Calu3 (cell line): ENCODE measurements at regions of chr3 and their contacts with region 1.

Region 1: GRCh38 chr3:51530490-51530889 is 8.0 kb upstream of the RAD54L2 start:
- DNase-seq: no peak
- H3K4me3 Mint-ChIP-seq: no peak overlapping the region
- H3K27ac Mint-ChIP-seq: no peak overlapping the region
- H3K4me1 Mint-ChIP-seq: no peaks in the 10 kb centered on the region
- H3K27me3 Mint-ChIP-seq: peaks cover 48% of the 10 kb centered on the region
- CTCF ChIP-seq: no peak

Region 2: GRCh38 chr3:51511000-51511399 is 19.5 kb before region 1 on chr3:
- CTCF ChIA-PET with region 1: no interaction called
- intact Hi-C with region 1: loop called (anchors 1 kb)
- DNase-seq: no peak
- H3K4me3 Mint-ChIP-seq: no peak overlapping the region
- H3K27ac Mint-ChIP-seq: no peak overlapping the region
- H3K4me1 Mint-ChIP-seq: no peaks in the 10 kb centered on the region
- H3K27me3 Mint-ChIP-seq: no peaks in the 10 kb centered on the region
- CTCF ChIP-seq: no peak

Region 3: DNA sequence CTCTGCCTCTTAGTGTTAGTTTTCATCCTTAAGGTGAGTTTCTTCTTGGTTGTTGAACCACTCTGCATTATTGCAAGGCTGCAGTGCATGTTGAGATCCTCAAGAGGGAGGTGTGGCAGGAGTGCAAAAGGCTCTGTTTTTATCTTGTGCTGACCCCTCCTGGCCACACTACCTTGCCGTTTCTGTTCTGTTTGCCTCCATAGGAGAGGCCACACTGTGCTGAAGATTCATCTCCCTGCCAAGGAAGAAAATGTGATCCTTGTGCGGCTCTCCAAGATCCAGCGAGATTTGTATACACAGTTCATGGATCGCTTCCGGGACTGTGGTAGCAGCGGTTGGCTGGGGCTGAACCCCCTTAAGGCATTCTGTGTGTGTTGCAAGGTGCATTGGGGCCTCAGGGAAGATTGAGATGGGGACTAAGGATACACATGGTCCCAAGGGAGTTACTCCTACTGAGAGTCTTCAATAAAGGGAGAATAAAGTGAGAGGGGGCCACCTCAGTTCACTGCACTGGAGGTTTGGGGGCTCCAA is 107.5 kb after region 1 on chr3:
- CTCF ChIA-PET with region 1: no interaction called
- intact Hi-C with region 1: no loop called
- DNase-seq: peak; percentile 58
- H3K4me3 Mint-ChIP-seq: no peak overlapping the region
- H3K27ac Mint-ChIP-seq: no peak overlapping the region
- H3K4me1 Mint-ChIP-seq: no peaks in the 10 kb centered on the region
- H3K27me3 Mint-ChIP-seq: no peaks in the 10 kb centered on the region
- CTCF ChIP-seq: peak; percentile 78

Region 4: GRCh38 chr3:51670823-51671733 is 140.6 kb after region 1 on chr3 and contains the start of gene TEX264:
- CTCF ChIA-PET with region 1: no interaction called
- intact Hi-C with region 1: no loop called
- DNase-seq: peak; percentile 89
- H3K4me3 Mint-ChIP-seq: peak within 1 kb of the TSS; percentile 97
- H3K27ac Mint-ChIP-seq: peak within 1 kb of the TSS; percentile 76
- H3K4me1 Mint-ChIP-seq: peaks cover 26% of the 10 kb centered on the region
- H3K27me3 Mint-ChIP-seq: no peaks in the 10 kb centered on the region
- CTCF ChIP-seq: no peak
- total RNA-seq, gene TEX264: 37.0 and 44.9 TPM in 2 replicates